Activated CD8-positive, alpha-beta T cell treated with anti-CD3 and anti-CD28 coated beads for 36 hours (primary cell): ENCODE measurements at regions of chr10 and their contacts with region 1.

Region 1: DNA sequence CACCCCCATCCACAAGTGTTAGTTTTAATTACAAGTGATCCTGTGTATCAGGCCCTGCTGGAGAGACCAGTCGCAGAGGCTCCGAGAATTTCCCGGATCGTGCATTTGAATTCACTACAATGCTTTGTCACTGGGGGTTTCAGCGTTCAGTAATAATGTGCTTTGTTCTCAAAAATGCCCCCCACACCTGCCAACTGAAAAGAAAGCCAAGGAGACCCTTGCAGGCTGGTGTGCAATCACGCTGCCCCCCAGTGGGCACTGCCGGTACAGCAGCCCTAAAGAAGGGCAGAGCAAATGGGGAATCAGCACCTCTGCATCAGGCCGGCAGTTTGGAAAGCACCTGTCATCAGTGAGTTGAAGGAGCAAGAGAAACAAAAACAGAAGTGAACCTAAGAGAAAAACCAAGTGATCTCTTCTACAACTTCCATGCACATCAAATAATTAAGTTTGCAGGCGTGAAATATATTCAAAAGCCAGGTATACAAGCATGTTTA is 177.6 kb downstream of the PARD3 start:
- DNase-seq: peak; percentile 78
- ATAC-seq: peak; percentile 77
- H3K4me3 Mint-ChIP-seq: no peak overlapping the region
- H3K27ac Mint-ChIP-seq: no peak overlapping the region
- H3K4me1 Mint-ChIP-seq: peaks cover 5% of the 10 kb centered on the region
- H3K27me3 Mint-ChIP-seq: peaks cover 2% of the 10 kb centered on the region
- CTCF ChIP-seq: peak; percentile 92

Region 2: GRCh38 chr10:33330543-33331378 is 1306.7 kb before region 1 on chr10:
- CTCF ChIA-PET with region 1: interaction called, 23 read pairs
- POLR2A ChIA-PET with region 1: no interaction called
- intact Hi-C with region 1: loop called (anchors 5 kb)
- DNase-seq: peak; percentile 86
- ATAC-seq: peak; percentile 48
- H3K4me3 Mint-ChIP-seq: no peak overlapping the region
- H3K27ac Mint-ChIP-seq: no peak overlapping the region
- H3K4me1 Mint-ChIP-seq: peaks cover 16% of the 10 kb centered on the region
- H3K27me3 Mint-ChIP-seq: peaks cover 64% of the 10 kb centered on the region
- CTCF ChIP-seq: peak; percentile 92

Region 3: GRCh38 chr10:34423673-34424625 is 213.5 kb before region 1 on chr10:
- CTCF ChIA-PET with region 1: no interaction called
- POLR2A ChIA-PET with region 1: no interaction called
- intact Hi-C with region 1: no loop called
- DNase-seq: no peak
- ATAC-seq: no peak
- H3K4me3 Mint-ChIP-seq: no peak overlapping the region
- H3K27ac Mint-ChIP-seq: no peak overlapping the region
- H3K4me1 Mint-ChIP-seq: no peaks in the 10 kb centered on the region
- H3K27me3 Mint-ChIP-seq: no peaks in the 10 kb centered on the region
- CTCF ChIP-seq: no peak

Region 4: DNA sequence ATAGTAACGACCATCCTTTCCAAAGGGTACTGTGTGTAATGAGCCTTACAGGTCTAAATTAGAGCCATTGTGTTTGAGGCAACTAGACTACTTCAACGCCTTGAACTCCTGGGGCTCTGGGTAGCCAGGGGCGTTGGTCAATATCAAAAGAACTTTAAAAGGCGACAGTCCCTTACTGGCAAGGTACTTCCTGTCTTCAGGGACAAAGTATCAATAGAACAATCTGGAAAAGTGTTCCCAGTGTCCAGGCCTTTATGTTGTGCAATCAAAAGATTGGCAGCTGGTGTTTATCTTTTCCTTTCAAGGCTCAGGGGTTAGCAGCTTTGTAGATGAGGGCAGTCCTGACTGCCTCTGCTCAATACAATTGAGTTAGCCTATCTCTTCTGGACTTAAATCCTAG is 106.7 kb before region 1 on chr10:
- CTCF ChIA-PET with region 1: interaction called, 11 read pairs
- POLR2A ChIA-PET with region 1: no interaction called
- intact Hi-C with region 1: no loop called
- DNase-seq: no peak
- ATAC-seq: no peak
- H3K4me3 Mint-ChIP-seq: no peak overlapping the region
- H3K27ac Mint-ChIP-seq: no peak overlapping the region
- H3K4me1 Mint-ChIP-seq: no peaks in the 10 kb centered on the region
- H3K27me3 Mint-ChIP-seq: peaks cover 2% of the 10 kb centered on the region
- CTCF ChIP-seq: no peak

Region 5: DNA sequence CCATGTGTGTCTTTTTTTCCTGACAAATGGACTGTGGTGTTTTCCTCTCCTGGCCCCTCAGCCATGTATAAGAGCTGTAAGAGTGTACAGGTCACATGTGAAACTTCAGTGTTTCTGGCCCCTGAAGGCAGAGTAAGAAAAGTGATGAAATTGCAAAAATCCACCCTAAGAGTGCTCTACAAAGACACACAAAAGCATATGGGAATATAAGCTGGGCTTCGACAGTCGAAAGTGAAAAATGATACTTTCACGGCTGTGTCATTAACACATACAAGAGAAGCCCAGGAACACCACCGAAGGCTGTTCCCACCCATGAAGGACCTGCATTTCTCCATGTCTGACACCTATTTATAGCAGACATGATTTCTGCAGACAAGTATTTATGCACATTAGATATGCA is 14.5 kb before region 1 on chr10:
- CTCF ChIA-PET with region 1: interaction called, 24 read pairs
- POLR2A ChIA-PET with region 1: no interaction called
- intact Hi-C with region 1: no loop called
- DNase-seq: no peak
- ATAC-seq: no peak
- H3K4me3 Mint-ChIP-seq: no peak overlapping the region
- H3K27ac Mint-ChIP-seq: no peak overlapping the region
- H3K4me1 Mint-ChIP-seq: no peaks in the 10 kb centered on the region
- H3K27me3 Mint-ChIP-seq: no peaks in the 10 kb centered on the region
- CTCF ChIP-seq: no peak

Region 6: GRCh38 chr10:34655286-34656170 is 18.1 kb after region 1 on chr10:
- CTCF ChIA-PET with region 1: interaction called, 22 read pairs
- POLR2A ChIA-PET with region 1: no interaction called
- intact Hi-C with region 1: no loop called
- DNase-seq: peak; percentile 59
- ATAC-seq: no peak
- H3K4me3 Mint-ChIP-seq: no peak overlapping the region
- H3K27ac Mint-ChIP-seq: no peak overlapping the region
- H3K4me1 Mint-ChIP-seq: no peaks in the 10 kb centered on the region
- H3K27me3 Mint-ChIP-seq: peaks cover 3% of the 10 kb centered on the region
- CTCF ChIP-seq: peak; percentile 66